ENCODE measurements at regions of chr3 and their contacts with region 1.

Region 1: DNA sequence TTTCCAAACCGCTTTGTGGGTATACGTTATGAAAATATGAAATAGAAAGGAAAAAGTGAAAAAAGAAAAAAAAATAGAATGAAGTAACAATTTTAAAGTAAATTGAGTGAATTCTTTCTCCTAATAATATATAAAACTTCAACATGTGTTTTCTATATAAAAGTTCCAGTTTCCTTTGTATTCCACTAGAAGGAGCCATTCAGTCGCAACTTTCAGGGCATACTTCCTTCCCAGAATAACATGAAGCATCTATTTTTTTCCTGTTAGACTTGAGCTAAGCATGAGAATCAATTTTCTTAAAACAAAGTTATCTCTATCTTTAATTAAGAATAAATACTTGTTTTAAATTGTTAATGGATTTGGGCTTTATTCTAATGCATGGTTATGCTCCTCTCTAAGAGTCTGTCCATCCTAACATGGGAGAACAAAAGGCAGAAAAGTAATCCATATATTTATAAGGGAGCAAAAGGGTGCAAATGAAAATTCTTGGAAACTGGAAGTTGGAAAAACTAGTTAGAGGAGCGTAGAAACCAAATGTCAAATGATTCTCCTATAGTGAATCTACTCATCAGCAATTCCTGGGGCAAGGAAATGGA is 16.0 kb upstream of the VGLL3 start:
- DNase-seq: no peak
- ATAC-seq: no peak
- H3K4me3 ChIP-seq: no peak overlapping the region
- H3K27ac ChIP-seq: no peak overlapping the region
- H3K4me1 ChIP-seq: no peaks in the 10 kb centered on the region
- H3K27me3 ChIP-seq: no peaks in the 10 kb centered on the region
- CTCF ChIP-seq: peak in 6 of 12 donors; percentile 14 to 44 (median 30)
- POLR2A ChIP-seq: no peak

Region 2: GRCh38 chr3:86785386-86785785 is 221.6 kb before region 1 on chr3:
- intact Hi-C with region 1: loop called in 1 of 10 experiments (anchors 10 kb)
- DNase-seq: no peak
- ATAC-seq: peak in 1 of 4 donors; percentile 51
- H3K4me3 ChIP-seq: no peak overlapping the region
- H3K27ac ChIP-seq: no peak overlapping the region
- H3K4me1 ChIP-seq: no peaks in the 10 kb centered on the region
- H3K27me3 ChIP-seq: no peaks in the 10 kb centered on the region
- CTCF ChIP-seq: peak in 5 of 12 donors; percentile 9 to 41 (median 34)
- POLR2A ChIP-seq: no peak